ENCODE measurements at regions of chr10 and their contacts with region 1.

Region 1: DNA sequence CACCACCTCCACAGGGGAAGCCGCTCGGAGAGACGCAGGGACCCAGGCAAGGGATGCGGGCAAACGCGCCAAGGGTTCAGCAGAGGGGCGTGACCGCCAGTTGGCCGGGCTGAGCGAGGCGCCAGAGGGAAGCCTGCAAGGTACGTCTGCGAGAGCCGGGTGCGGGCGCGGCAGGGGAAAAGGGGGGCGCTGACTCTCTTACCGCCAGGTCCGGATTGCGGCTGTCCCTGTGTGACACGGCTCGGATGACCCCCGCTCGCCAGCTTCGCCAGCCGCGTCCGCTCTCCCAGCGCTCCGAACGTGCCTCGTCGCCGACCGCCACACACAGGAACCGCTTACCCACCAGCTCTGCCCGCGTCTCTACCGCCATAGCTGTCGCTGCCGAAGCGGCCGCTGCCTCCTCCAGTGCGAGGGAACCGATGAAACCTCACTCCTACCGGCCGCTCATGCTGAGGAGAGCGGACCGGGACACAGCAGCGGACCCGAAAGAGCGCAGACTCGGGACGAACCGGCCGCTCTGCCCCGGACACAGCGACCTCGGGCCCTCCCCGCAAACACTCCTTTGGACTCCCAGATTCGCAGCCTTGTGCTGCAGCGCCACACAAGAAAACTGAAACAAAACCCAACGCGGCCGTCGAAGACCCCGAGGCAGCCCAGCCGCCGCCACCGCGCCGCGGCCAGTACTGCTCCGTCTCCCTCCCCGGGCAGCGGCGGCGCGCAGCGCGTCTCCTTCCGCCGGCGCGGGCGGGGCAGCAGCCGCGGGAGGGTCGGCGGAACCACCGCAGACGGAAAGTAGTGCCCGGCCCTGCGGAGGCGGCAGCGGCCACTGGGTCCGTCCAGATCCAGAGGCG is at the start of gene JMJD1C:
- DNase-seq: peak; percentile 82
- H3K4me3 ChIP-seq: peak within 1 kb of the TSS; percentile 67 to 93 (median 88)
- H3K27ac ChIP-seq: peak within 1 kb of the TSS; percentile 91 to 97 (median 94)
- H3K4me1 ChIP-seq: peaks cover 0 to 22% (median 8%) of the 10 kb centered on the region in 4 donors
- H3K27me3 ChIP-seq: no peaks in the 10 kb centered on the region
- CTCF ChIP-seq: no peak
- EP300 ChIP-seq: no peak
- POLR2A ChIP-seq: peak; percentile 74
- total RNA-seq, gene JMJD1C: 56.7 to 128 (median 78.9) TPM

Region 2: GRCh38 chr10:63217120-63217605 is 248.4 kb before region 1 on chr10:
- in situ Hi-C with region 1: loop called in 3 of 4 experiments (anchors 10 to 25 kb)
- intact Hi-C with region 1: no loop called
- DNase-seq: no peak
- H3K4me3 ChIP-seq: no peak overlapping the region
- H3K27ac ChIP-seq: peak overlapping the region; percentile 18 to 55 (median 28)
- H3K4me1 ChIP-seq: peaks cover 5 to 23% (median 13%) of the 10 kb centered on the region in 4 donors
- H3K27me3 ChIP-seq: no peaks in the 10 kb centered on the region
- CTCF ChIP-seq: peak; percentile 66 to 91 (median 77)
- EP300 ChIP-seq: no peak
- POLR2A ChIP-seq: no peak

Region 3: GRCh38 chr10:63521416-63522276 is 56.1 kb after region 1 on chr10:
- in situ Hi-C with region 1: no loop called
- intact Hi-C with region 1: loop called (anchors 5 kb)
- DNase-seq: peak; percentile 66
- H3K4me3 ChIP-seq: peak overlapping the region; percentile 78 to 93 (median 89)
- H3K27ac ChIP-seq: peak overlapping the region; percentile 99 to 100 (median 100)
- H3K4me1 ChIP-seq: peaks cover 22 to 50% (median 38%) of the 10 kb centered on the region in 4 donors
- H3K27me3 ChIP-seq: no peaks in the 10 kb centered on the region
- CTCF ChIP-seq: no peak
- EP300 ChIP-seq: no peak
- POLR2A ChIP-seq: peak; percentile 64

Region 4: GRCh38 chr10:63595072-63595471 is 129.6 kb after region 1 on chr10:
- in situ Hi-C with region 1: no loop called
- intact Hi-C with region 1: no loop called
- DNase-seq: no peak
- H3K4me3 ChIP-seq: no peak overlapping the region
- H3K27ac ChIP-seq: no peak overlapping the region
- H3K4me1 ChIP-seq: peaks cover 0 to 5% (median 0%) of the 10 kb centered on the region in 4 donors
- H3K27me3 ChIP-seq: no peaks in the 10 kb centered on the region
- CTCF ChIP-seq: peak in 2 of 5 experiments; percentile 25 to 47
- EP300 ChIP-seq: no peak
- POLR2A ChIP-seq: no peak

Region 5: GRCh38 chr10:63629363-63630084 is 164.0 kb after region 1 on chr10:
- in situ Hi-C with region 1: no loop called
- intact Hi-C with region 1: loop called (anchors 10 kb)
- DNase-seq: peak; percentile 96
- H3K4me3 ChIP-seq: peak overlapping the region; percentile 36 to 71 (median 61)
- H3K27ac ChIP-seq: peak overlapping the region; percentile 97 to 100 (median 98)
- H3K4me1 ChIP-seq: peaks cover 7 to 29% (median 23%) of the 10 kb centered on the region in 4 donors
- H3K27me3 ChIP-seq: no peaks in the 10 kb centered on the region
- CTCF ChIP-seq: peak; percentile 66 to 85 (median 72)
- EP300 ChIP-seq: peak; percentile 77
- POLR2A ChIP-seq: no peak

Region 6: GRCh38 chr10:63720072-63720537 is 254.6 kb after region 1 on chr10:
- in situ Hi-C with region 1: no loop called
- intact Hi-C with region 1: loop called (anchors 5 kb)
- DNase-seq: peak; percentile 56
- H3K4me3 ChIP-seq: no peak overlapping the region
- H3K27ac ChIP-seq: peak overlapping the region in 1 of 4 donors; percentile 65
- H3K4me1 ChIP-seq: peaks cover 0 to 27% (median 0%) of the 10 kb centered on the region in 4 donors
- H3K27me3 ChIP-seq: no peaks in the 10 kb centered on the region
- CTCF ChIP-seq: peak; percentile 94 to 99 (median 98)
- EP300 ChIP-seq: no peak
- POLR2A ChIP-seq: no peak